ENCODE measurements at regions of chr9 and their contacts with region 1.

Region 1: GRCh38 chr9:34332076-34332964 is 3.0 kb downstream of the NUDT2 start:
- DNase-seq: peak; percentile 26
- H3K4me3 Mint-ChIP-seq: peak overlapping the region; percentile 19
- H3K27ac Mint-ChIP-seq: no peak overlapping the region
- H3K4me1 Mint-ChIP-seq: peaks cover 35% of the 10 kb centered on the region
- H3K27me3 Mint-ChIP-seq: no peaks in the 10 kb centered on the region

Region 2: DNA sequence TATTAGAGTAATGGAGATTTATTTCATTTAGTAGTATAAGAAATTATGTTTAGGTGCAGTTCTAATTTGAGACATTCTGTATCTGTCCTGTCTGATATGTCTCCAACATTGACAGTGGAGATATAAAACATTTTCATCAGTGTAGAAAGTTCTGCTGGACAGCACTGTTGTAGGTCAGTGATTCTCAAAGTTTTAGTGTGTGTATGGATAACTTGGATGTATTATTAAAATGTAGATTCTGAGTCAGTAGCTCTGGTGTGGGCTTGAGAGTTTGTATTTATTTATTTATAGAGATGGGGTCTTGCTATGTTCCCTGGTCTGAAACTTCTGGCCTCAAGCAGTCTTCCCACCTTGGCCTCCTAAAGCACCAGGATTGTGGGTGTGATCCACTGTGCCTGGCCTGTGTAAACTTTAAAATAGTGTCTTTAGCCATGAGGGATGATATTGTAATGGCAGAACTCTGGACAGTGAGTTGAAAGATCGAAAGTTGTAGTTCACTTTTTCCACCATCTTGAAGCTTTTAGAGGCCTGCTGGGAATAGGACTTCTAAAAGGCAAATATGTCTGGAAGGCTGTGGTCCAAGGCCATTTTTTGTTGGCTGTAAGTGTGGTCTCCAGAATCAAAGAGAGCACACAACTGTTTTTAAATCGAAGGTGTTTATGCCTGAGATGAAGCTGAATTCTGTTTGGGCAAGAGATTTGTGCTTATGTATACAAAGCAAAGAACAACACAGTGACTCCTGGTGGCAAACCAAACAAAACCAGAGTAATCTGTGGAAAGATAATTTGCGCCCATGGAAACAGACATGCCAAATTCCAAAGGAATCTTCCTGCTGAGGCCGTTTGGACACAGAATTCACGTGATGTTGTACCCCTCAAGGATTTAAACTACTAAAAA is 141.1 kb before region 1 on chr9:
- CTCF ChIA-PET with region 1: no interaction called
- DNase-seq: no peak
- H3K4me3 Mint-ChIP-seq: no peak overlapping the region
- H3K27ac Mint-ChIP-seq: no peak overlapping the region
- H3K4me1 Mint-ChIP-seq: peaks cover 35% of the 10 kb centered on the region
- H3K27me3 Mint-ChIP-seq: no peaks in the 10 kb centered on the region

Region 3: GRCh38 chr9:34246453-34246852 is 85.9 kb before region 1 on chr9:
- CTCF ChIA-PET with region 1: no interaction called
- DNase-seq: no peak
- H3K4me3 Mint-ChIP-seq: no peak overlapping the region
- H3K27ac Mint-ChIP-seq: peak overlapping the region; percentile 33
- H3K4me1 Mint-ChIP-seq: no peaks in the 10 kb centered on the region
- H3K27me3 Mint-ChIP-seq: no peaks in the 10 kb centered on the region

Region 4: GRCh38 chr9:34292552-34292951 is 39.8 kb before region 1 on chr9:
- CTCF ChIA-PET with region 1: no interaction called
- DNase-seq: no peak
- H3K4me3 Mint-ChIP-seq: no peak overlapping the region
- H3K27ac Mint-ChIP-seq: no peak overlapping the region
- H3K4me1 Mint-ChIP-seq: no peaks in the 10 kb centered on the region
- H3K27me3 Mint-ChIP-seq: no peaks in the 10 kb centered on the region

Region 5: DNA sequence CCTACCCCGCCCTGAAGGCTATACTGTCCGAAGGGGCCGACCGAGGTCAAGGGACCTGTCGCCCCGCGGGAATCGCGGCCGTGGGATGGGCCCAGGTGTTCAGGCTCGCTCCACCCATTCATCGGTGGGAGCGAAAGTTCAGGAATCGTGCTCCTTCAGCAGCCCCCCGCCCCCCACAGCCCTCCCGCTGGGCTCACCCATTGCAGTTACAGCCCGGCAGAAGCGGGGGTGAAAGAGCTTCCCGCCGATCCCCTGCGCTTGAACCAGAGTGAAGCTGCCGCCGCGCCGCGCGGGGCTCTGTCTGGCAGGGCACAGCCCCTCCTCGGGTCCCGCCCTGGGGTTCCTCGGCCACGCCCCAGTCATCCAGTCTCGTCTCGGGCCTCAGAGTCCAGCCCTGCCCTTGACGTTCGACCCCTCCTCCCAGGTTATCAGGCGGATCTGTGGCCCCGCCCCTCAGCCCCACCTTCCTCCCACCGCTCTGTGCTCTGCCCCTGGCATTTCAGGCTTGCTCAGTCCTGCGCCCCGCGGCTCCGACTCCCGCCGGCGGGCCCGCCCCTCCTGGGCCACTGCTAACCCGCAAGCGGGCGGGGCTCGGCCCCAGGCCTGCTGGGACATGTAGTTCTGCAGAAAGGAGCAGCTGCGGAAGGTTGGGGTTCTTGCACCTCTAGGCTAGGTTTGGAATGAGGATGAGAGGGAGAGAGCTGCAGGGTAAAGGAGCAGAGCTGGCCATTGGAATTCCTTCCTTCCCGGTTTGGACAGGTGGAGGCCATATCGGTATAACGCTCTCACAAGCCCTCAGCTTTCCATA is 44.5 kb after region 1 on chr9 and contains the start of gene MYORG:
- CTCF ChIA-PET with region 1: interaction called, 119 read pairs
- DNase-seq: peak; percentile 99
- H3K4me3 Mint-ChIP-seq: peak within 1 kb of the TSS; percentile 90
- H3K27ac Mint-ChIP-seq: peak within 1 kb of the TSS; percentile 82
- H3K4me1 Mint-ChIP-seq: peaks cover 48% of the 10 kb centered on the region
- H3K27me3 Mint-ChIP-seq: peaks cover 29% of the 10 kb centered on the region

Measured in activated naive CD4-positive, alpha-beta T cell treated with anti-CD3 and anti-CD28 coated beads, Interleukin-2, amount 10 ng/mL, durations not matched to agents 7 days and 5 days (primary cell).